CD4-positive, alpha-beta memory T cell (primary cell): ENCODE measurements at regions of chrX and their contacts with region 1.

Region 1: GRCh38 chrX:136665258-136665900 is 17.4 kb downstream of the CD40LG start:
- DNase-seq: no peak
- H3K4me3 ChIP-seq: no peak overlapping the region
- H3K4me3 Mint-ChIP-seq: peak overlapping the region in 7 of 8 donors; percentile 33 to 83 (median 49)
- H3K27ac ChIP-seq: peak overlapping the region; percentile 4
- H3K27ac Mint-ChIP-seq: peak overlapping the region; percentile 69 to 95 (median 80)
- H3K4me1 ChIP-seq: peaks cover 95% of the 10 kb centered on the region
- H3K4me1 Mint-ChIP-seq: peaks cover 52 to 94% (median 71%) of the 10 kb centered on the region in 4 donors
- H3K27me3 ChIP-seq: no peaks in the 10 kb centered on the region
- H3K27me3 Mint-ChIP-seq: no peaks in the 10 kb centered on the region

Region 2: DNA sequence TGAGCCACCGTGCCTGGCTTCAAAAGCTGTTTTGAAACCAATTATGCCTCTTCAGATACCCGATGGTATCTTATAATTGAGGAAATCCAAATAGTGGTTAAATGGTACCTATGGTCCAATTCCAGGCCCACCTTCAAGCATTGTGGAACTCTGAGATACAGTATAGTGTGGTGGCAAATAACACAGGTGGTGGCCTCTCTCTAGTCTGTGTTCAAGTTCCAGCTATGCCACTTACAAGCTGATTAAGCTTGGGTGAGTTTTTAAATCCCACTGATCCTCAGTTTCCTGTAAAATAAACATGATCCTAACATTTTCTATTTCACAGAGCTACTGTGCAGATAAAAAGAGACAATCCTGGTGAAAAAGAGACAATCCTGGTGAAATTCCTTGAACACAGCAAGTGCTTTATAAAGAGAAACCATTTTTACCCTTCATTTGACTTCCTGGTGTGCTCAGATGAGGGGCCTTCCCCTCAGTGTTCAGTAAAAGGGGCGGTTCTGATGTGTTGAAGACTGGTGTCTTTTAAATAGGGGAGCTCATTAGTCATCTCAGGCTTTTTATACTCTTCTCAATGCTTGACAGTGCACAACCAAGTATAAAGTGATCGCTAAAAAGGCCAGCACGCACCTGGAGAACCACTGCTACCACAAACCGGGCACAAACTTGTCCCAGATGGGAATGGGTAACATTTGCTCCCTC is 48.2 kb before region 1 on chrX:
- CTCF ChIA-PET with region 1: no interaction called
- POLR2A ChIA-PET with region 1: interaction called, 45 read pairs
- intact Hi-C with region 1: no loop called
- DNase-seq: peak in 4 of 5 donors; percentile 42 to 69 (median 48)
- H3K4me3 ChIP-seq: peak overlapping the region in 1 of 2 donors; percentile 18
- H3K4me3 Mint-ChIP-seq: peak overlapping the region; percentile 27 to 81 (median 68)
- H3K27ac ChIP-seq: peak overlapping the region; percentile 57
- H3K27ac Mint-ChIP-seq: peak overlapping the region; percentile 79 to 93 (median 87)
- H3K4me1 ChIP-seq: peaks cover 67% of the 10 kb centered on the region
- H3K4me1 Mint-ChIP-seq: peaks cover 36 to 70% (median 46%) of the 10 kb centered on the region in 4 donors
- H3K27me3 ChIP-seq: no peaks in the 10 kb centered on the region
- H3K27me3 Mint-ChIP-seq: no peaks in the 10 kb centered on the region

Region 3: GRCh38 chrX:136626237-136626636 is 39.1 kb before region 1 on chrX:
- CTCF ChIA-PET with region 1: no interaction called
- POLR2A ChIA-PET with region 1: interaction called, 59 read pairs
- intact Hi-C with region 1: no loop called
- DNase-seq: no peak
- H3K4me3 ChIP-seq: no peak overlapping the region
- H3K4me3 Mint-ChIP-seq: peak overlapping the region in 7 of 8 donors; percentile 15 to 82 (median 24)
- H3K27ac ChIP-seq: no peak overlapping the region
- H3K27ac Mint-ChIP-seq: peak overlapping the region in 6 of 7 donors; percentile 32 to 94 (median 76)
- H3K4me1 ChIP-seq: peaks cover 90% of the 10 kb centered on the region
- H3K4me1 Mint-ChIP-seq: peaks cover 59 to 91% (median 77%) of the 10 kb centered on the region in 4 donors
- H3K27me3 ChIP-seq: no peaks in the 10 kb centered on the region
- H3K27me3 Mint-ChIP-seq: no peaks in the 10 kb centered on the region

Region 4: DNA sequence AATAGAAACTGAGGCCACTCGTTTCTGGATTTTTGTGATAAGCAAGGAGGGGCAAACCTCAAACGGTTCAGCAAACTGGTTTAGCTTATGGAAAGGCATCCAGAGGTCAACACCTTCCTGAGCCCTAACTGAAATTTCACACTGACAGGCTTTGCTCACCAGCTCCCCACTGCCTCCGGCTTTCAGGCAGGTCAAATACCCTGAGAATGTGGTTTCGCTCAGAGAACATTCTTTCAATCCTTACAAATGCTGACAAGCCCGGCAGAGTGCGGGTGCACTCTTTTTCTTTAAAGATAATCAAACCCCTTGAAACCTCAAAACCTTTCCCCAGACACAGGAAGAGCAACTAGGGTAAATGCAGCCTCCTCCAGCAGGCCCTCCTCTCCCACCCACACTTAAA is 24.1 kb after region 1 on chrX:
- CTCF ChIA-PET with region 1: interaction called, 4 read pairs
- POLR2A ChIA-PET with region 1: interaction called, 53 read pairs
- intact Hi-C with region 1: no loop called
- DNase-seq: peak in 2 of 5 donors; percentile 27 to 29
- H3K4me3 ChIP-seq: no peak overlapping the region
- H3K4me3 Mint-ChIP-seq: peak overlapping the region in 7 of 8 donors; percentile 34 to 61 (median 59)
- H3K27ac ChIP-seq: peak overlapping the region; percentile 44
- H3K27ac Mint-ChIP-seq: peak overlapping the region; percentile 77 to 99 (median 86)
- H3K4me1 ChIP-seq: peaks cover 89% of the 10 kb centered on the region
- H3K4me1 Mint-ChIP-seq: peaks cover 46 to 77% (median 56%) of the 10 kb centered on the region in 4 donors
- H3K27me3 ChIP-seq: no peaks in the 10 kb centered on the region
- H3K27me3 Mint-ChIP-seq: no peaks in the 10 kb centered on the region

Region 5: GRCh38 chrX:136909706-136910564 is 244.6 kb after region 1 on chrX:
- CTCF ChIA-PET with region 1: no interaction called
- POLR2A ChIA-PET with region 1: no interaction called
- intact Hi-C with region 1: no loop called
- DNase-seq: peak; percentile 43 to 79 (median 48)
- H3K4me3 ChIP-seq: peak overlapping the region; percentile 61 to 83
- H3K4me3 Mint-ChIP-seq: peak overlapping the region; percentile 88 to 96 (median 94)
- H3K27ac ChIP-seq: peak overlapping the region; percentile 90
- H3K27ac Mint-ChIP-seq: peak overlapping the region; percentile 80 to 97 (median 93)
- H3K4me1 ChIP-seq: peaks cover 7% of the 10 kb centered on the region
- H3K4me1 Mint-ChIP-seq: peaks cover 8 to 22% (median 11%) of the 10 kb centered on the region in 4 donors
- H3K27me3 ChIP-seq: no peaks in the 10 kb centered on the region
- H3K27me3 Mint-ChIP-seq: no peaks in the 10 kb centered on the region